HCT116 (cell line): ENCODE measurements at regions of chr4 and their contacts with region 1.

Region 1: DNA sequence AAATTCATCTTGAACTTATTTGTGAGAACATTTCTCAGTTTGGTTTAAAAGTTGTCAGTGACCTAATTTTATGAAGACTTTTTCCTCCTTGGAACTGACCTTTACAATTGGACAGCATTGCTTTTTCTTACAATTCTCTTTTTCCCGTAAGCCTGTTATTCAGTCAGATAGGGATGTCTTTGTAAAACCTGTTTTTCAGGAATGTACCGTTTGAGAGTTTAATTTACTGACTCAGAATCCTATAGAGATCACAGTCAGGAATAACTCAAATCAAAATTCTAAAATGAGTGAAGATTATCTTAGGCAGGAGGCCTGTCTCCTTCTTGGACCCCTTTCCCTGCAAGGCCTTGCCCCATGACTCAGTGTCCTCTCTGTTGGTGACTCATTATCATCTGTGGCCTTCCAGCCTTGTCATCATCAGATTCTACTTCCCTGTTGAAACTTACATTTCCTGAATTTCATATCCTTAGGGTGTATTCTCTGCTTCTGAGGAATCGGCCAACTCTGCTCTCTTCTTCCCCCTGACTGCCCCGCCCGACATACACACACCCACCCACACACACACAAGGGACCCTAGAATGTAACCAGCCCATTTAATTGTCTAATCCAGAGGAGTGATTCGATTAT is 99.8 kb downstream of the ARHGAP10 start:
- DNase-seq: peak; percentile 87
- ATAC-seq: peak; percentile 87
- H3K4me3 ChIP-seq: peak overlapping the region in 1 of 2 experiments; percentile 46; a peak in 2 of 4 replicates
- H3K27ac ChIP-seq: peak overlapping the region; percentile 67
- H3K4me1 ChIP-seq: peaks cover 32 to 44% of the 10 kb centered on the region in 2 experiments
- H3K27me3 ChIP-seq: no peaks in the 10 kb centered on the region
- CTCF ChIP-seq: no peak
- POLR2A ChIP-seq: no peak
- RAD21 ChIP-seq: 0 out of 2 replicates have a peak, but pooled peaks have one; percentile 27

Region 2: GRCh38 chr4:147034372-147034771 is 797.3 kb before region 1 on chr4:
- CTCF ChIA-PET with region 1: no interaction called
- POLR2A ChIA-PET with region 1: no interaction called
- RAD21 ChIA-PET with region 1: no interaction called
- intact Hi-C with region 1: no loop called
- DNase-seq: no peak
- ATAC-seq: no peak
- H3K4me3 ChIP-seq: no peak overlapping the region
- H3K27ac ChIP-seq: no peak overlapping the region
- H3K4me1 ChIP-seq: no peaks in the 10 kb centered on the region
- H3K27me3 ChIP-seq: peaks cover 50% of the 10 kb centered on the region
- CTCF ChIP-seq: no peak
- POLR2A ChIP-seq: no peak
- RAD21 ChIP-seq: no peak

Region 3: GRCh38 chr4:147236806-147237205 is 594.9 kb before region 1 on chr4:
- CTCF ChIA-PET with region 1: no interaction called
- POLR2A ChIA-PET with region 1: no interaction called
- RAD21 ChIA-PET with region 1: no interaction called
- intact Hi-C with region 1: no loop called
- DNase-seq: no peak
- ATAC-seq: no peak
- H3K4me3 ChIP-seq: no peak overlapping the region
- H3K27ac ChIP-seq: no peak overlapping the region
- H3K4me1 ChIP-seq: no peaks in the 10 kb centered on the region
- H3K27me3 ChIP-seq: no peaks in the 10 kb centered on the region
- CTCF ChIP-seq: no peak
- POLR2A ChIP-seq: no peak
- RAD21 ChIP-seq: no peak

Region 4: DNA sequence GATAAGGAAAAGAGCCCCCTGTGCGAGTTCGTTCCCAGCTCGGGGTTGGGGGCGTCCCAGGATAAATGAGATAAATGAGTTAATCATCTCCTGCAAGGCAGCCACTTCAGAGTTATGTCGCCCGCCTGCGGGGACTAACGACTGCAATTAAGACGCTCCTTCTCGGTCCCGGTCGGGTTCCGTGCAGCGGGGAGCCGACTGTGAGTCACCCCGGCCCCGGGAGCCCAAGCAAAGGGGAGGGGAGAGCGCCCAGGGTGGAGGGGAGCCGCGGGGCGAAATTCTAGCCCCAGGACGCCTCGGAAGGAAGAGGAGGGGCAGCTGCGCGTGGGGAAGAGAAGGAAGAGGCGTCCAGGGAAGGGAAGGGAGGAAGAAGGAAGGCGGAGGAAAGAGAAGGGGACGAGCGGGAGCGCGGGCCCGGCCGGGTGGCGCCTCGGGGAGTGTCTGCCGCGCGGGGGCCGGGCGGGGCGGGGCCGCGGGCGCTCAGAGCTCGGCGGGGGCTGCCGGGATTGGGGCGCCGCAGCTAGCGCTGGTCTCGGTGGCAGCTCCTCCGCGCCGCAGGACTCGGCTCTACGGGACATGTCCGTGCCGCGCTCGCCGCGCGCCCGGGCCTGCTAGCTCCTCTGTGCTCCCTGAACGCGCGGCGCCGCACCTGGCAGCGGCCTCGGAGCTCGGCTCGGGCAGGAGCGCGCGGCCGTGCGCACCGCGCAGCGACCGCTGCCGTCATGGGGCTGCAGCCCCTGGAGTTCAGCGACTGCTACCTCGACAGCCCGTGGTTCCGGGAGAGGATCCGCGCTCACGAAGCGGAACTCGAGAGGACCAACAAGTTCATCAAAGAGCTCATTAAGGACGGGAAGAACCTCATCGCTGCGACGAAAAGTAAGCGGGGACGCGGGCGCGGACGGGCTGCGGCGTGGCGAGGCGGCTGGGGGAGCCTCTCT is 99.8 kb before region 1 on chr4 and contains the start of gene ARHGAP10:
- CTCF ChIA-PET with region 1: no interaction called
- POLR2A ChIA-PET with region 1: no interaction called
- RAD21 ChIA-PET with region 1: no interaction called
- intact Hi-C with region 1: loop called (anchors 2 kb)
- DNase-seq: no peak
- ATAC-seq: peak; percentile 79
- H3K4me3 ChIP-seq: peak within 1 kb of the TSS; percentile 78 to 81
- H3K27ac ChIP-seq: peak within 1 kb of the TSS; percentile 88
- H3K4me1 ChIP-seq: peaks cover 54 to 77% of the 10 kb centered on the region in 2 experiments
- H3K27me3 ChIP-seq: no peaks in the 10 kb centered on the region
- CTCF ChIP-seq: no peak
- POLR2A ChIP-seq: peak; percentile 53
- RAD21 ChIP-seq: no peak
- total RNA-seq, gene ARHGAP10: 24.7 TPM

Region 5: DNA sequence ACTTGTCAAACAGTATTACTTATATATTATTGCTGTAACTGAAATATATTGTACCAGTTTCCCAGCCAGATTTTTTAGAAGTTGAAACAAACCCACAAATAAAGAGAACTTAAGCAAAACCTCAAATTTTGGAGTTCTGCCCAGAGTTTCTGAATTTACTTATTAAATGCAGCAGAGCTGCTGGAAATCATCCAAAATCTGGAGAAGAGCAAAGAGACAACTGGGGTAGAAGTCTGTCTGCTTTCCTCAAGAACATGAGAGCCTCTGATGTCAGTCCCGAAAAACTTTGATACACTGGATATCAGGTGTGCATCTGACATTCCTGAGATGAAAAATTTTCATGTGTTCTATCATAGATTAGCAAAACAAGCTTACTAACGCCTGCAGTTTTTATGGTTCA is 284.6 kb after region 1 on chr4:
- CTCF ChIA-PET with region 1: no interaction called
- POLR2A ChIA-PET with region 1: no interaction called
- RAD21 ChIA-PET with region 1: no interaction called
- intact Hi-C with region 1: no loop called
- DNase-seq: no peak
- ATAC-seq: no peak
- H3K4me3 ChIP-seq: no peak overlapping the region
- H3K27ac ChIP-seq: no peak overlapping the region
- H3K4me1 ChIP-seq: no peaks in the 10 kb centered on the region
- H3K27me3 ChIP-seq: no peaks in the 10 kb centered on the region
- CTCF ChIP-seq: no peak
- POLR2A ChIP-seq: no peak
- RAD21 ChIP-seq: no peak

Region 6: GRCh38 chr4:148270630-148271029 is 439.0 kb after region 1 on chr4:
- CTCF ChIA-PET with region 1: no interaction called
- POLR2A ChIA-PET with region 1: no interaction called
- RAD21 ChIA-PET with region 1: no interaction called
- intact Hi-C with region 1: no loop called
- DNase-seq: no peak
- ATAC-seq: no peak
- H3K4me3 ChIP-seq: no peak overlapping the region
- H3K27ac ChIP-seq: no peak overlapping the region
- H3K4me1 ChIP-seq: no peaks in the 10 kb centered on the region
- H3K27me3 ChIP-seq: no peaks in the 10 kb centered on the region
- CTCF ChIP-seq: no peak
- POLR2A ChIP-seq: no peak
- RAD21 ChIP-seq: no peak